Colonic mucosa (tissue), 4 donors: ENCODE measurements at regions of chr10 and their contacts with region 1.

Region 1: DNA sequence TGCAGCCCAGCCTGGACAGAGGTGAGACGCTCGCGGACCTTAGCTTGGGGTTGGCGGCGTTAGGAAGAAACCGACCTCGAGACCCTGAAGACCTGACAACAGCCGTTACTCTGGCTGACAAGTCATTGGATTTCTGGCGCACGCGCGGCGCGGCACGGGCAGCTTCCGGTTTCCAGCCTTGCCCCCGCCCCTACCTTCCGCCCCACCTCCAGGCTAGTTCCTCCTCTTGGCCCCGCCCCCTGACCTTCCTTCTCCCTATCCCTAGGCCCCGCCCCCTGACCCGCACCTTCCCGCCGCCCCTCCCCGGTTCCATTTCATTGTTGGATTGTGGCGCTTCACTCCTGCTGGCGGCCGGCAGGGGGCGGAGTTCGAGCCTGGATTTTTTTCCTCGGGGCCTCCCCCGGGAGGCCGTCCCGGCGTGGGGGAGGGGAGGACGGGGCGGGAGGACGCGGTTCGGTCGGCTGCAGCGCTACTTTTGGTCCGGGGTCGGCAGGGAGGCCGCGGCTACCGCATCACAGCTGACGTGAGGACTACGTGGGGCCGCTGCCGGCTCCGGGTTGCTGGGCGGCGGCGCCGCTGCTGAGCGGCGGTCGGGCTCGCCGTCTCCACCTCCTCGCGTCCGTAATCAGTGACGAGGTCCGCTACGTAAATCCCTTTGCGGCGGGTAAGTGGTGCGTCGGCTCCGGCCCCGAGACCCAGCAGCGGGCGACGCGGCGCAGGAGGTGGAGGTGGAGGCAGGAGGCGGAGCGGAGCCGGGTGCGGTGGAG is at the start of gene CREM:
- DNase-seq: peak; percentile 100
- H3K4me3 ChIP-seq: peak within 1 kb of the TSS; percentile 81
- H3K27ac ChIP-seq: peak within 1 kb of the TSS; percentile 99
- H3K4me1 ChIP-seq: peaks cover 10% of the 10 kb centered on the region
- H3K27me3 ChIP-seq: no peaks in the 10 kb centered on the region
- CTCF ChIP-seq: peak; percentile 69
- total RNA-seq, gene CREM: 10.9 to 24.8 TPM

Region 2: DNA sequence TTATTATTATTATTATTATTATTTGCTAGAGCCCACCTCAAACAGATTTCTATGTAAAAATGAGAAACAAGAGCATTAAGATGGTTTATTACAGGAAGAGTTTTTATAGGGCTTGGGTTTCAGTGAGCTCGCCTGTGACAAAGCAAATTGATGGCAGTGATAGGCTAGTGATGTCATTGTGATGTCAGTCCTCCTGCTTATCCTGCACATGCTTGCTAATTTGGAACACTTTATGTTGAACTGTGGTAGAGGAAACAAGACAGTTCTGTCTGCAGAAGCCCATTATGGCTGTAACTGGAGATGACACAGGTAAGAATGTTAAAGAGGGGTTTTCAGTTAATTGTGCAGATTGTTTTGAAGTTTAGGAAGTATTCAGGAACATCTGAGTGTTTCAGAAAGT is 68.2 kb after region 1 on chr10:
- intact Hi-C with region 1: loop called (anchors 5 kb)
- DNase-seq: no peak
- H3K4me3 ChIP-seq: no peak overlapping the region
- H3K27ac ChIP-seq: peak overlapping the region; percentile 87
- H3K4me1 ChIP-seq: no peaks in the 10 kb centered on the region
- H3K27me3 ChIP-seq: no peaks in the 10 kb centered on the region
- CTCF ChIP-seq: no peak

Region 3: DNA sequence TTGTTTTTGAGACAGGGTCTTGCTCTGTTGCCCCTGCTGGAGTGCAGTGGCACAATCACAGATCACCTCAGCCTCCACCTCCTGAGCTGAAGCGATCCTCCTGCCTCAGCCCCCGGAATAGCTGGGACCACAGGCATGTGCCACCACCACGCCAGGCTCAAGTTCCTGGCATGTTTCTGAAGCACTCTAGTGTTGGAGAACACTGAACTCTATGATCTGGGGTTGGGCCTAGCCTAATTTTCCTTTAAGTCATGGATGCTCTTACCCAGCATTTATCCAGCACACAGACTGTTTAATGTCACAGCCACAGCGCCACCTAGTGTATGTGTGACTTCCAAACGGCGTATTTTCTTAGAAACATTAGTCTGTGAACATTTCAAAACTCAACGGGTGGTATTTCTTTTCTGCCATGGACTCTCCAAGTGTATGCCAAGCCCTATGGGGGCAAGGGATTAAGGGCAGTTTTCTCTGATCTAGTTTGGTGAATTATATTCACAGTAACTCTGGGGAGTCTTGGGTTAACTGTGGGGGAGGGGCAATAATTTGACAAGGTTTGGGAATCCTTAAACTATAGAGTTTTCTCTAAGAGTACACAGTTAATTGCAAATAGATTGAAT is 91.7 kb after region 1 on chr10:
- intact Hi-C with region 1: loop called (anchors 2 kb)
- DNase-seq: peak; percentile 84
- H3K4me3 ChIP-seq: no peak overlapping the region
- H3K27ac ChIP-seq: no peak overlapping the region
- H3K4me1 ChIP-seq: no peaks in the 10 kb centered on the region
- H3K27me3 ChIP-seq: no peaks in the 10 kb centered on the region
- CTCF ChIP-seq: peak; percentile 75